Psoas muscle (tissue), 8 donors: ENCODE measurements at regions of chr10 and their contacts with region 1.

Region 1: DNA sequence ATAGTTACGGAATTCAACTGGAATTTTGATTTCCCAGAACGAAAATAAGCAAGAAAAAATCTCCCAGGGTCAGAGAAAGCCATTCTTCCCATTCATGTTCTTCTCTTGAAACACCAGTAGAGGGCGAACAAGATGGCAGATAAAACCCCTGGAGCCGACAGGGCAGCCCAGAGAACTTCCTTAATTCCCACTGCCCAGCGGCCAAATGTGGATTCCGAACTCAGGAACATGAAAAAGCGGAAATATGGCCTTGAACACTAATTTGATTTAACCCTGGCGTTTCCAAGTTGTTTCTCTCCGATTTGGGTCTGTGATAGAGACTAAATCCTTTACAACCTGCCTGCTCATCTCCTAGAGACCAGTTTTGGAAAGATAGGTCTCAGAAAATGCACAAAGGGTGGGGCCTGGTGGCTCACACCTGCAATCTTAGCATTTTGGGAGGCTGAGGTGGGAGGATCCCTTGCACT is 100.7 kb upstream of the WAC start:
- DNase-seq: peak; percentile 31 to 66
- ATAC-seq: peak; percentile 62 to 89 (median 69)
- H3K4me3 ChIP-seq: peak overlapping the region; percentile 5
- H3K27ac ChIP-seq: no peak overlapping the region
- H3K4me1 ChIP-seq: no peaks in the 10 kb centered on the region
- H3K27me3 ChIP-seq: no peaks in the 10 kb centered on the region
- CTCF ChIP-seq: peak; percentile 80

Region 2: DNA sequence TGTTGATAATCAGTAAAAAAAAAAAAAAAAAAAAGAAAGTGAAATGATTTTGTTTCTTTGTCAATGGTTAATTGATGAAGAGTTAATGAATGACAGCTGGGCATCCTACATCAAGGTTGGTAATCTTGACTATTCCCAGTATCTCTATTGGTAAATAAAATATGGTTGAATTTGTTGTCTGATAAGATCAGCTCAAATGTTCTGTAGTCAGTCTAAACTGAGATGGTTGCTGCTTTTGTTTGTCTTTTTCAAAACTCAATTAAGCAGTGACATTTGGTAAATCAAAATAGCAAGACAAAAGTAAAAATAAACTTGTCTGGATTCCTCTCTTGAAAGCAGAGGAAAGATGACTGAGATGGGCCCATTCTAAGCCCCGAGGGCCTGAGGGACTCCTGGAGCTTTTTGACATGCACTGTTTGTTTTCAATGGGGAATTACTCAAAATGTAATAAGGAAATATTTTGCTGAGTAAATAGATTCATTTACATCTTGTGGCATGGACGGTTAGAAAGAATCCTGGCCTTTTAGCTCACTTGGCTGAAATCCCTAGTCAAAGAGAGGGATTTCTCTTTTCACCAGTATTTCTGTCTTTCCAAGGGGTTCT is 794.8 kb before region 1 on chr10:
- intact Hi-C with region 1: no loop called
- DNase-seq: no peak
- ATAC-seq: no peak
- H3K4me3 ChIP-seq: no peak overlapping the region
- H3K27ac ChIP-seq: no peak overlapping the region
- H3K4me1 ChIP-seq: no peaks in the 10 kb centered on the region
- H3K27me3 ChIP-seq: no peaks in the 10 kb centered on the region
- CTCF ChIP-seq: no peak

Region 3: GRCh38 chr10:28587970-28588290 is 155.7 kb after region 1 on chr10:
- intact Hi-C with region 1: loop called (anchors 2 to 5 kb)
- DNase-seq: no peak
- ATAC-seq: peak; percentile 57 to 80 (median 76)
- H3K4me3 ChIP-seq: no peak overlapping the region
- H3K27ac ChIP-seq: peak overlapping the region; percentile 5
- H3K4me1 ChIP-seq: peaks cover 30% of the 10 kb centered on the region
- H3K27me3 ChIP-seq: no peaks in the 10 kb centered on the region
- CTCF ChIP-seq: peak; percentile 32

Region 4: GRCh38 chr10:28592930-28593329 is 160.7 kb after region 1 on chr10:
- intact Hi-C with region 1: loop called (anchors 2 to 5 kb)
- DNase-seq: no peak
- ATAC-seq: peak; percentile 76 to 86 (median 78)
- H3K4me3 ChIP-seq: no peak overlapping the region
- H3K27ac ChIP-seq: peak overlapping the region; percentile 4
- H3K4me1 ChIP-seq: peaks cover 27% of the 10 kb centered on the region
- H3K27me3 ChIP-seq: no peaks in the 10 kb centered on the region
- CTCF ChIP-seq: no peak